Dorsolateral prefrontal cortex (tissue), 120 donors: ENCODE measurements at regions of chr10 and their contacts with region 1.

Region 1: DNA sequence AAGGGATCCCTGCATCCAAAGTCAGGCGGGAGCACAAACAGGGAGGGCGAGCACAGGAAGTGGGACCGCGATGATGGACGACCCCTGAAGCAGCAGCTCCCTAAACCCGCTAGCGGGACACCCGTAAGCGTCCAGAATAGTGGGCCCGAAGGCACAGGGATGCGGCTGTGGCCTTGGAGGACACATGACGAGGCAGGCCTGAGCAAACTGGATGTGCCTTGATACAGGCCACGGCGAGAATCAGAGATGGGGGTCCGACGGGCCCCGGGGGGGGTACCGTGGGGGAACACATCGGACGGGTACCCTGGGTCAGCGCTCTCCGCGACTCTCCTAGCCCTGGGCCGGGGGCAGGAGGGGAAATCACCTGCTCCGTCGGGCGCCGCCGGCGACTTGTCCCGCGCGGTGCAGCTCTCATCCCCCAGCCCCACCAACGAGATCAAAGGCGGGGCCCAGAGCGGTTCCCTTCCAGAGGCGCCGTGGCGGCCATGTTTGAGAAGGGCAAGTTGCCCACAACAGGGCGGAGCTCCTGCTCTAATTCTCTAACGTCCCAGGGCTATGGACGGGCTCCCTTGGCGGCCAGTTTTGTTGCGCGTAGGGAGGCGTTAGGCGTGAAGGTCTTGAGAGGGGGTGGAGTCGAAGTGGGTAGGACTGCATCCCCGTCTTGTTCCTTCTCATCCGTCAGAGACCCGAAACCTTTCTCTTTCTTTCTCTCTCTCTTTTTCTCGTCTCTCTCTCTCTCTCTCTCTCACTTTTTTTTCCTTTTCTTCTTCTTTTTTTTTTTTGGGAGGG is at the start of gene CUEDC2:
- DNase-seq: peak; percentile 93 to 98 (median 98)
- H3K4me3 ChIP-seq: peak within 1 kb of the TSS; percentile 67 to 100 (median 95)
- H3K27ac ChIP-seq: peak within 1 kb of the TSS; percentile 17 to 95 (median 86)
- H3K27me3 ChIP-seq: peaks cover 0 to 4% (median 0%) of the 10 kb centered on the region in 45 donors
- CTCF ChIP-seq: peak in 35 of 56 donors; percentile 9 to 61 (median 33)
- total RNA-seq, gene CUEDC2: 53.3 to 107 (median 81.5) TPM

Region 2: GRCh38 chr10:102450194-102450938 is 18.0 kb after region 1 on chr10:
- intact Hi-C with region 1: loop called (anchors 2 kb)
- DNase-seq: peak; percentile 50 to 91 (median 80)
- H3K4me3 ChIP-seq: peak overlapping the region; percentile 65 to 96 (median 85)
- H3K27ac ChIP-seq: peak overlapping the region in 58 of 59 donors; percentile 31 to 96 (median 84)
- H3K27me3 ChIP-seq: no peaks in the 10 kb centered on the region
- CTCF ChIP-seq: peak in 10 of 56 donors; percentile 7 to 34 (median 20)

Region 3: DNA sequence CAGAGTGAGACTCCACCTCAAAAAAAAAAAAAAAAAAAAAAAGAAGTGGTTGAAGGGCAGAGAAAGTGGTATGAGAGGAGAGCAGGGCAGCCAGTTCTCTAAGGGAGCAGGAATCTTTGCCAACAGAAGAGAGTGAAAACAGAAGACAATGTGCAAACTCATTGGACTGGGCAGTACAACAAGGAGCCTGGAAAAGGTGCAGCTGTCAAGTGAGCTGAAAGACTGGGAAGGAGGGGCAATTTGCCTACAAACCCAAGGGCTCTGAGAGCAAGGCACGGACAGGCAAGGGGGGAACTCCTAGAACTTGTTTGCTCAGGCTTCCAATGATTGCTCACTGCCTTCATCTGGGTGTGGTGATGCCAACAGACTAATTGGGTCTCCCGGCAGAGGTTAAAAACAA is 60.6 kb after region 1 on chr10:
- intact Hi-C with region 1: no loop called
- DNase-seq: peak in 2 of 10 donors; percentile 26 to 30
- H3K4me3 ChIP-seq: no peak overlapping the region
- H3K27ac ChIP-seq: peak overlapping the region in 40 of 59 donors; percentile 3 to 76 (median 46)
- H3K27me3 ChIP-seq: no peaks in the 10 kb centered on the region
- CTCF ChIP-seq: no peak